ENCODE measurements at regions of chr15 and their contacts with region 1.

Region 1: GRCh38 chr15:64355944-64356709 is at the start of gene CSNK1G1:
- DNase-seq: peak; percentile 87
- H3K4me3 Mint-ChIP-seq: peak within 1 kb of the TSS; percentile 96
- H3K27ac Mint-ChIP-seq: peak within 1 kb of the TSS; percentile 97
- H3K4me1 Mint-ChIP-seq: peaks cover 19% of the 10 kb centered on the region
- H3K27me3 Mint-ChIP-seq: no peaks in the 10 kb centered on the region
- total RNA-seq, gene CSNK1G1: 31.3 and 33.2 TPM in 2 replicates

Region 2: DNA sequence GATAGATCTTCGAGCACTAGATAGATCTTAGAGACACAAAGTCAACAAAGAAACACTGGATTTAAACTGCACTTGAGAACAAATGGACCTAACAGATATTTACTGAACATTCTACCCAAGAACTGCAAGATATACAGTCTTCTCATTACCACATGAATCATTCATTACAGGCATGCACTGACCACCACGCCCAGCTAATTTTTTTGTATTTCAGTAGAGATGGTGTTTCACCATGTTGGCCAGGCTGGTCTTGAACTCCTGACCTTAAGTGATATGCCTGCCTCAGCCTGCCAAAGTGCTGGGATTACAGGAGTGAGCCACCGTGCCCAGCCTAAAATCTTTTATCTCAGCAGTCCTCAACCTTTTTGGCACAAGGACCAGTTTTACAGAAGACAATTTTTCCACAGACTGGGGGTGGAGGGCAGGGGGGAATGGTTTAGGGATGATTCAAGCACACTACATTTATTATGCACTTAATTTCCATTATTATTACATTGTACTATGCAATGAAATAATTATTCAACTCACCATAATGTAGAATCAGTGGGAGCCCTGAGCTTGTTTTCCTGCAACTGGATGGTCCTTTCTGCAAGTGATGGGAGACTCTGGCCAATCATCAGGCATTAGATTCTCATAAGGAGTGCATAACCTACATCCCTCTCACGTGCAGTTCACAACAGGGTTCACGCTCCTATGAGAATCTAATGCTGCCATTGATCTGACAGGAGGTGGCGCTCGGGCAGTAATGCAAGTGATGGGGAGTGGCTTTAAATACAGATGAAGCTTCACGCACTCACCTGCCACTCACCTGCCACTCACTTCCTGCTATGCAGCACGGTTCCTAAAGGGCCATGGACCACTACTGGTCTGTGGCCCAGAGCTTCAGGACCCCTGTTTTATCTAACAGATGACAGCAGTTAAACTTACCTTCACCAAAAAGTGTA is 21.9 kb before region 1 on chr15:
- intact Hi-C with region 1: no loop called
- DNase-seq: no peak
- H3K4me3 Mint-ChIP-seq: no peak overlapping the region
- H3K27ac Mint-ChIP-seq: no peak overlapping the region
- H3K4me1 Mint-ChIP-seq: peaks cover 35% of the 10 kb centered on the region
- H3K27me3 Mint-ChIP-seq: no peaks in the 10 kb centered on the region

Region 3: GRCh38 chr15:64381000-64381752 is 25.0 kb after region 1 on chr15 and contains the start of gene PCLAF:
- intact Hi-C with region 1: loop called (anchors 1 kb)
- DNase-seq: peak; percentile 93
- H3K4me3 Mint-ChIP-seq: peak within 1 kb of the TSS; percentile 94
- H3K27ac Mint-ChIP-seq: peak within 1 kb of the TSS; percentile 92
- H3K4me1 Mint-ChIP-seq: peaks cover 16% of the 10 kb centered on the region
- H3K27me3 Mint-ChIP-seq: no peaks in the 10 kb centered on the region
- total RNA-seq, gene PCLAF: 58.6 and 69.8 TPM in 2 replicates

Measured in activated T-helper 1 cell treated with anti-CD3 and anti-CD28 coated beads, Interleukin-12 subunit alpha, Interleukin-12 subunit beta, Interleukin-2, Interleukin-4 antibody, amounts not matched to agents 30 ng/mL and 10 ng/mL and 1 ng/mL, durations not matched to agents 14 hours and 24 hours and 36 hours (primary cell).